CD4-positive, alpha-beta T cell (primary cell): ENCODE measurements at regions of chr17 and their contacts with region 1.

Region 1: DNA sequence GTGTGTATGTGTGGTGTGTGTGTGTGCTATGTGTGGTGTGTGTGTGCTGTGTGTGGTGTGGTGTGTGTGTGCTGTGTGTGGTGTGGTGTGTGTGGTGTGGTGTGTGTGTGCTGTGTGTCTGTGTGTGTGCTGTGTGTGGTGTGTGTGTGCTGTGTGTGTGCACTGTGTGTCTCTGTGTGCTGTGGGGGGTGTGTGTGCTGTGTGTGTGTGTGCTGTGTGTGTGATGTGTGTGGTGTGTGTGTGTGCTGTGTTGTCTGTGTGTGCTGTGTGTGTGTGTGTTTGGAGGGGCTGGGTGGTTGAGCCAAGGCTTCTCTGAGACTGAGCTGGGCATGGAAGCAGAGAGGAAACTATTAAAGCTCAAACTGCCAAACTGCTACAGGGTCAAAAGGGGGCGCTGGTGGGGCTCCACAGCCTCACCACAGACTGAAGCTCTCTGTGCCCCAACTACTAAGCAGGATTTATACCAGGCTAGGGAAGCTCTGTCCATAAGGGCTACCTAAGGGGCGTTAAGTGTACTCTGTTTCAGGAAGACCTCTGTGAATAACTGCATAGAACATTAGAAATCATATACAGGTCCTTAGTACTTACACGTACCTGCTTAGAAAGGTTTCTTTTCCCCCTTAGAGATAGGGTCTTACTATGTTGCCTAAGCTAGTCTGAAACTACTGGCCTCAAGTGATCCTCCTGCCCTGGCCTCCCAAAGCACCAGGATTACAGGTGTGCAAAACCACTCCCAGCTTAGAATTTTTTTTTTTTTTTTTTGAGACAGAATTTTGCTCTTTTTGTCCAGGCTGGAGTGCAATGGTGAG is 27.8 kb upstream of the GHDC start:
- DNase-seq: peak; percentile 46 to 85 (median 56)
- ATAC-seq: peak; percentile 99
- H3K4me3 ChIP-seq: no peak overlapping the region
- H3K4me3 Mint-ChIP-seq: no peak overlapping the region
- H3K27ac ChIP-seq: no peak overlapping the region
- H3K27ac Mint-ChIP-seq: peak overlapping the region; percentile 49
- H3K4me1 ChIP-seq: peaks cover 7% of the 10 kb centered on the region
- H3K4me1 Mint-ChIP-seq: peaks cover 10% of the 10 kb centered on the region
- H3K27me3 ChIP-seq: no peaks in the 10 kb centered on the region
- H3K27me3 Mint-ChIP-seq: no peaks in the 10 kb centered on the region
- CTCF ChIP-seq: peak; percentile 62

Region 2: GRCh38 chr17:42243493-42243996 is 21.4 kb after region 1 on chr17:
- CTCF ChIA-PET with region 1: interaction called, 47 read pairs
- POLR2A ChIA-PET with region 1: interaction called, 46 read pairs
- intact Hi-C with region 1: loop called in 1 of 2 experiments (anchors 2 kb)
- DNase-seq: no peak
- ATAC-seq: no peak
- H3K4me3 ChIP-seq: no peak overlapping the region
- H3K4me3 Mint-ChIP-seq: no peak overlapping the region
- H3K27ac ChIP-seq: no peak overlapping the region
- H3K27ac Mint-ChIP-seq: peak overlapping the region; percentile 54
- H3K4me1 ChIP-seq: peaks cover 47% of the 10 kb centered on the region
- H3K4me1 Mint-ChIP-seq: peaks cover 61% of the 10 kb centered on the region
- H3K27me3 ChIP-seq: no peaks in the 10 kb centered on the region
- H3K27me3 Mint-ChIP-seq: no peaks in the 10 kb centered on the region
- CTCF ChIP-seq: no peak

Region 3: GRCh38 chr17:42266918-42267778 is 45.0 kb after region 1 on chr17:
- CTCF ChIA-PET with region 1: interaction called, 28 read pairs
- POLR2A ChIA-PET with region 1: interaction called, 3 read pairs
- intact Hi-C with region 1: loop called in 1 of 2 experiments (anchors 1 kb)
- DNase-seq: peak in 7 of 14 experiments; percentile 29 to 91 (median 65)
- ATAC-seq: peak; percentile 86
- H3K4me3 ChIP-seq: no peak overlapping the region
- H3K4me3 Mint-ChIP-seq: peak overlapping the region; percentile 71
- H3K27ac ChIP-seq: peak overlapping the region; percentile 36 to 62
- H3K27ac Mint-ChIP-seq: peak overlapping the region; percentile 91
- H3K4me1 ChIP-seq: peaks cover 47% of the 10 kb centered on the region
- H3K4me1 Mint-ChIP-seq: peaks cover 62% of the 10 kb centered on the region
- H3K27me3 ChIP-seq: no peaks in the 10 kb centered on the region
- H3K27me3 Mint-ChIP-seq: no peaks in the 10 kb centered on the region
- CTCF ChIP-seq: no peak

Region 4: GRCh38 chr17:42287926-42288802 is 66.0 kb after region 1 on chr17 and contains the start of gene STAT5A:
- CTCF ChIA-PET with region 1: interaction called, 20 read pairs
- POLR2A ChIA-PET with region 1: interaction called, 18 read pairs
- intact Hi-C with region 1: loop called (anchors 1 to 2 kb)
- DNase-seq: peak; percentile 60 to 92 (median 76)
- ATAC-seq: peak; percentile 81
- H3K4me3 ChIP-seq: peak within 1 kb of the TSS; percentile 86
- H3K4me3 Mint-ChIP-seq: peak within 1 kb of the TSS; percentile 92
- H3K27ac ChIP-seq: peak within 1 kb of the TSS; percentile 87 to 89
- H3K27ac Mint-ChIP-seq: peak within 1 kb of the TSS; percentile 95
- H3K4me1 ChIP-seq: peaks cover 61% of the 10 kb centered on the region
- H3K4me1 Mint-ChIP-seq: peaks cover 51% of the 10 kb centered on the region
- H3K27me3 ChIP-seq: no peaks in the 10 kb centered on the region
- H3K27me3 Mint-ChIP-seq: no peaks in the 10 kb centered on the region
- CTCF ChIP-seq: no peak
- total RNA-seq, gene STAT5A: 141 to 150 TPM

Region 5: GRCh38 chr17:42322382-42323267 is 100.5 kb after region 1 on chr17:
- CTCF ChIA-PET with region 1: interaction called, 15 read pairs
- POLR2A ChIA-PET with region 1: no interaction called
- intact Hi-C with region 1: no loop called
- DNase-seq: peak; percentile 89 to 98 (median 95)
- ATAC-seq: peak; percentile 97
- H3K4me3 ChIP-seq: no peak overlapping the region
- H3K4me3 Mint-ChIP-seq: no peak overlapping the region
- H3K27ac ChIP-seq: peak overlapping the region in 1 of 2 donors; percentile 18
- H3K27ac Mint-ChIP-seq: peak overlapping the region; percentile 76
- H3K4me1 ChIP-seq: peaks cover 26% of the 10 kb centered on the region
- H3K4me1 Mint-ChIP-seq: peaks cover 37% of the 10 kb centered on the region
- H3K27me3 ChIP-seq: no peaks in the 10 kb centered on the region
- H3K27me3 Mint-ChIP-seq: no peaks in the 10 kb centered on the region
- CTCF ChIP-seq: peak; percentile 100

Region 6: DNA sequence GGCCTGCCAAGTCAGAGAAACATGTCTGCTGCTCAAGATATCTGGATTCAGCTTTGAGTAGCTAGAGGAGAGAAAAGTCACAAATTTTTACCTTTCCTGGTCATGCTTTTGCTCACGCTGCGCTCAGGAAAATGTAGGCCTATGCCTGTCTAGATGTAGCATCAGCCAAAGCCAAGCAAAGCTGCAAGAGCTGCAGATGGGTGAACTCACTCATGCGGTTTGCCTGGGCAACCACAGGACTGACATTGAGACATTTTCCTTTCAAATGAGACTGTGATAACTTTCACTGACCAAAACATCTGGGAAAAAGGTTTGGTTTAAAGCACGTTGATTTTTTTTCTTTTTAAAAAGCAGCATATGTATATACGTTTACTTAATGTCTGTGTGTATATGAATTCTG is 279.9 kb after region 1 on chr17:
- CTCF ChIA-PET with region 1: no interaction called
- POLR2A ChIA-PET with region 1: no interaction called
- intact Hi-C with region 1: no loop called
- DNase-seq: no peak
- ATAC-seq: no peak
- H3K4me3 ChIP-seq: no peak overlapping the region
- H3K4me3 Mint-ChIP-seq: no peak overlapping the region
- H3K27ac ChIP-seq: no peak overlapping the region
- H3K27ac Mint-ChIP-seq: no peak overlapping the region
- H3K4me1 ChIP-seq: no peaks in the 10 kb centered on the region
- H3K4me1 Mint-ChIP-seq: no peaks in the 10 kb centered on the region
- H3K27me3 ChIP-seq: no peaks in the 10 kb centered on the region
- H3K27me3 Mint-ChIP-seq: no peaks in the 10 kb centered on the region
- CTCF ChIP-seq: no peak

Region 7: DNA sequence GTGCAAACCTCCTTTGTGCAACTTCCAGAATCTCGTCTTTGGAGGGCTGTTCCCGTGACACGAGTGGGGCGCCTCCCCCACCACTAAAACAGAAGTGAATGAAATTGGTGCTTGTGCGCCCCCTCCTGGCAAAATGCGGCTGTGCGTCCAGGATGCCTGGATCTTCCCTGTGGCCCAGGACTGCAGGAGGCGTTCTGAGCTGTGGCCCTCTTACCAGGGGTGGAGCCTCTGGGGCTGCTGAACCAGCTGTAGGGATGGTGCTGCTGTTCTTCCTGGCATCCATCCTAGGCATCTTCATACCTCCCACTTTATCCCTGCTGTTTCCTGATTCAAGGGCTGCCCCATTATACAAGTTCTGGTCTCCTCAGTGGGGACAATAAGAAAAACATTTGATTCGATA is 295.4 kb after region 1 on chr17:
- CTCF ChIA-PET with region 1: interaction called, 3 read pairs
- POLR2A ChIA-PET with region 1: no interaction called
- intact Hi-C with region 1: loop called in 1 of 2 experiments (anchors 5 kb)
- DNase-seq: peak; percentile 69 to 90 (median 79)
- ATAC-seq: peak; percentile 93
- H3K4me3 ChIP-seq: no peak overlapping the region
- H3K4me3 Mint-ChIP-seq: no peak overlapping the region
- H3K27ac ChIP-seq: no peak overlapping the region
- H3K27ac Mint-ChIP-seq: no peak overlapping the region
- H3K4me1 ChIP-seq: peaks cover 6% of the 10 kb centered on the region
- H3K4me1 Mint-ChIP-seq: peaks cover 8% of the 10 kb centered on the region
- H3K27me3 ChIP-seq: no peaks in the 10 kb centered on the region
- H3K27me3 Mint-ChIP-seq: no peaks in the 10 kb centered on the region
- CTCF ChIP-seq: peak; percentile 97